Cardiac septum (tissue), 1 donor: ENCODE measurements at regions of chr1 and their contacts with region 1.

Region 1: DNA sequence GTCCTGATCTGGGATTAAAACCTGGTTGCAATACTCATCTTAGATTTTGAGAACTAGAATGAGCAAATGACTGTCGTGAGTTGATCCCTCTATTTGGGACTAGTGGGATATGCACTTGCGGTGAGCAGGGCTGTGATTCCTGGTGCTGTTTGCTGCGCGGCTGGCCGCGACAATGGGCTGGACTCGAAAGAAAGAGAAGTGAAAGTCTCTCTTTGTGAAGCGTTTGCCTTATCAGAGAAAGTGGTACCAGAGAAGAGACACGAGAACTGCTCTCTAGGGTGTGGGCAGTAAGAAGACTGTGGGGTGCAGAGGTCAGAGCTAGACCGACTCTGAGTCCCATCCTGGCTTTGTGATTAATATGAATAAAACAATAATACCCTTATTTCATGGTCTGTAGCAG is 8.6 kb downstream of the ST6GALNAC3 start:
- DNase-seq: no peak

Region 2: GRCh38 chr1:76138217-76138616 is 55.0 kb after region 1 on chr1:
- intact Hi-C with region 1: loop called (anchors 2 kb)
- DNase-seq: no peak